ENCODE measurements at regions of chr16 and their contacts with region 1.

Region 1: DNA sequence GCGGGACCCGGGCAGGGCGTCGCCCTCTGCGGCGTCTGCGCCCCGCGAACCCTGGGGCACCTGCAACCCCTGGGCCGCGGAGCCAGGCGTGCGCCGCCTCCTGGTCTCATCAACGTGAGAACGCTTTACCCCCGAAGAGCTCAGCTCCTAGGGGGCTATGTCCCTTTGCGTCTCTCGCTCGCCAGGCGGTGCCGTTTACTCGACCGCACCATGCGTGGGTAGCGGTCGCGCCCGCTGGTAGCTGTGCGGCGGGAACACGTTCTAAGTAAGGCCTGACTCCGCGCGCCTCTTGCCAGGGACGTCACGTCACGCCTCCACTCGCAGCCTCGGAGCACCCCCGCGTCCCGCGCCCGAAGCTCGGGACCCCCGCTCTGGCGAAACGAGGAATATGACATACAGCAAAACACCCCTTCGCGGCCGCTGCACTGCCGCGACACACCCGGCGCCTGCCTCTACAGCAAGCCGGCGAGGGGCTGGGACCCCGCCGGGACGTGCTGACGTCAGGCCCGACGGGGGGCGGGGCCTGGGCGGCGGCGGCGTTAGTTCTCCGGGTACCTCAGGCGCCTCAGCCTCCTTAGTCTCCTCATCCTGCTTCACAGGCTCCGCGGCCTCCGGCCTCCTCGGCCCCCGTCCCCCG is at the start of gene RAB11FIP3:
- DNase-seq: peak; percentile 88
- H3K4me3 ChIP-seq: peak within 1 kb of the TSS; percentile 40 to 81 (median 77)
- H3K27ac ChIP-seq: peak within 1 kb of the TSS; percentile 94
- H3K4me1 ChIP-seq: peaks cover 27% of the 10 kb centered on the region
- H3K27me3 ChIP-seq: no peaks in the 10 kb centered on the region
- CTCF ChIP-seq: peak; percentile 7 to 16
- POLR2A ChIP-seq: peak; percentile 97
- total RNA-seq, gene RAB11FIP3: 64.9 and 75.9 TPM in 2 replicates

Region 2: DNA sequence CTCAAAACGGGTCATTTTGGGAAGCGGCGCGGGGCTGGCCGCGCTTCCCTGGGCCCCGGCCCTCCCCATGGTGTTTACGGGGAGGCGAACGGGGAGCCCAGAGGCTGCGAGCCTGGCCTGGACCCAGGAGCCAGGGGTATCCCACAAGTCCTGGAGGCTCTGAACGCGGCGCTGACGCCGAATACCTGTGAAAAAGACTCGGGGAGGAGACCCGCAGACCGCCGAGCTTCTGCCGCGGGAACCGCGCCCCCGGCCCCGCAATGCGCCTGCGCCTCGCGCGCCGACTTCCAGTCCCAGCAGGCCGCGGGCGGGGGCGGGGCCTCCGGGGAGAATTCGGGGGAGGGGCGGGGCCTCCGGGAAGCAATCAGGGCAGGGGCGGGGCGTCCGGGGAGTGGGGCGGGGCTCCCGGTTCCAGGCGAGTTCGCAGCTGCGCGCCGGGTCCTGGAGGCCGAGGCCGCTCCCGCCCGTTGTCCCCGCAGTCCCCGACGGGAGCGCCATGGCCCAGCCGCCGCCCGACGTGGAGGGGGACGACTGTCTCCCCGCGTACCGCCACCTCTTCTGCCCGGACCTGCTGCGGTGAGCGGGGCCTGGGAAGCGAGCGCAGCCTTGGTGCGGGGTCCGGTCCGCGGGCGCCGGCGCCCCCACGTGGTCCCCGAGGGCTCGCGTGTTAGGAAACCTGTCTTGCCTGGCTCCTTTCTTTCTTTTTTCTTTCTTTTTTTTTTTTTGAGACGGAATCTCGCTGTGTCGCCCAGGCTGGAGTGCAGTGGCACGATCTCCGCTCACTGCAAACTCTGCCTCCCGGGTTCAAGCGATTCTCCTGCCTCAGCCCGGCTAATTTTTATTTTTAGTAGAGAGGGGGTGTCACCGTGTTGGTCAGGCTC is 23.5 kb before region 1 on chr16 and contains the start of gene DECR2:
- CTCF ChIA-PET with region 1: interaction called, 4 read pairs
- POLR2A ChIA-PET with region 1: no interaction called
- dilution Hi-C with region 1: no loop called
- intact Hi-C with region 1: loop called (anchors 1 kb)
- DNase-seq: peak; percentile 87
- H3K4me3 ChIP-seq: peak within 1 kb of the TSS; percentile 58 to 74 (median 63)
- H3K27ac ChIP-seq: peak within 1 kb of the TSS; percentile 45
- H3K4me1 ChIP-seq: peaks cover 11% of the 10 kb centered on the region
- H3K27me3 ChIP-seq: no peaks in the 10 kb centered on the region
- CTCF ChIP-seq: peak; percentile 38 to 60
- POLR2A ChIP-seq: peak; percentile 94
- total RNA-seq, gene DECR2: 23.1 and 28.3 TPM in 2 replicates

Region 3: GRCh38 chr16:457732-458400 is 32.7 kb after region 1 on chr16:
- CTCF ChIA-PET with region 1: interaction called, 7 read pairs
- POLR2A ChIA-PET with region 1: no interaction called
- dilution Hi-C with region 1: no loop called
- intact Hi-C with region 1: loop called (anchors 1 kb)
- DNase-seq: peak; percentile 77
- H3K4me3 ChIP-seq: no peak overlapping the region
- H3K27ac ChIP-seq: peak overlapping the region; percentile 97
- H3K4me1 ChIP-seq: peaks cover 20% of the 10 kb centered on the region
- H3K27me3 ChIP-seq: no peaks in the 10 kb centered on the region
- CTCF ChIP-seq: peak in 1 of 2 donors; percentile 16
- POLR2A ChIP-seq: peak; percentile 36

Region 4: DNA sequence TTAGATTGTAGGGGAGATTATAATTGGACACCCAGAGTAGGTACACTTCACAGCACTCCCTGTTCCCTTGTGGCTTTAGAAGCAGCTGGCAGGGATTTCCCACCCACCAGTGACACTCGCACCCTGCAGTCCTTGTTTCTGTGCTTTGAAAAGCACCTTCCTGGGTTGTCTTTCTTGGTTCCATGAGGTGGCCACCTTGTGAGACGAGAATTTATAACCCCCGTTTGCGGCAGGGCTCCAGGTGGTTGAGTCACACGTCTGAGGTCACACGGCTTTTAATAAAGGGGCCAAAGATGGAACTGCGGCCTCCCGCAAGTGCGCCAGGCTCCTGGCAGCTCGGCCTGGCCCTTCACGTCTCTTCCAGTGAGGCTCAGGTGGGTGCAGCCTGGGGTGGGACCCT is 52.6 kb after region 1 on chr16:
- CTCF ChIA-PET with region 1: no interaction called
- POLR2A ChIA-PET with region 1: no interaction called
- dilution Hi-C with region 1: no loop called
- intact Hi-C with region 1: loop called (anchors 5 kb)
- DNase-seq: no peak
- H3K4me3 ChIP-seq: no peak overlapping the region
- H3K27ac ChIP-seq: peak overlapping the region; percentile 58
- H3K4me1 ChIP-seq: peaks cover 8% of the 10 kb centered on the region
- H3K27me3 ChIP-seq: no peaks in the 10 kb centered on the region
- CTCF ChIP-seq: no peak
- POLR2A ChIP-seq: peak; percentile 1

Region 5: GRCh38 chr16:483341-484075 is 58.3 kb after region 1 on chr16:
- CTCF ChIA-PET with region 1: interaction called, 19 read pairs
- POLR2A ChIA-PET with region 1: no interaction called
- dilution Hi-C with region 1: no loop called
- intact Hi-C with region 1: loop called (anchors 5 kb)
- DNase-seq: no peak
- H3K4me3 ChIP-seq: no peak overlapping the region
- H3K27ac ChIP-seq: no peak overlapping the region
- H3K4me1 ChIP-seq: no peaks in the 10 kb centered on the region
- H3K27me3 ChIP-seq: no peaks in the 10 kb centered on the region
- CTCF ChIP-seq: no peak
- POLR2A ChIP-seq: no peak

Region 6: DNA sequence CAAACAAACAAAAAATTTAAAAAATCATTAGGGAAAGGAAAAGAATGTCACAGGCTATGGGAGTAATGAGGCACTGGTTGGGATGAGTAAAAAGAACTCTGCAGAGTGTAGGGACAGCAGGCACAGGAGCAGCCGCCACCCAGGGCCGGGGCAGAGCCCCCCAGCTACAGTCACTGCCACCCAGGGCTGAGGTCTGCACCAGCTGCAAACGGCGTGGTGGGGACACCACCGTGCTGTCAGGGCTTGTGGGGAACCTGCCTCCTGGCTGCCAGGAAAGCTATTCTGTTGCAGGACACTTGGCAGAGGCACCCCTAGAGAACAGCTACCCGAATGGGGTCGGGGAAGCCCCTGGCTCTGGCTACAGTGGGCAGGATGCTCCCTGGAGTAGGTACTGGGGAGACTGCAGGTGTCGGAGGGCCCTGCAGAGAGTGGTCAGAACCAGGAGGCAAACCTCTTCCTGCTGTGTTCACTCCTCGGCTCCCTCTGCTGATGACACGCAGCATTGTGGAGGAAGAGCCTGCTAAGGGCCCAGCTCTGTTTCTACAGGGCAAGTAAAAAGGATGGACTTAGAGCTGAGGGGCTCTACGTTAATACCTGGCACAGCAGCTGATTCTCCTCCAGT is 70.0 kb after region 1 on chr16:
- CTCF ChIA-PET with region 1: interaction called, 6 read pairs
- POLR2A ChIA-PET with region 1: no interaction called
- dilution Hi-C with region 1: no loop called
- intact Hi-C with region 1: loop called (anchors 5 kb)
- DNase-seq: peak; percentile 49
- H3K4me3 ChIP-seq: no peak overlapping the region
- H3K27ac ChIP-seq: no peak overlapping the region
- H3K4me1 ChIP-seq: no peaks in the 10 kb centered on the region
- H3K27me3 ChIP-seq: no peaks in the 10 kb centered on the region
- CTCF ChIP-seq: peak; percentile 49 to 54
- POLR2A ChIP-seq: no peak

Region 7: GRCh38 chr16:527006-527753 is 102.0 kb after region 1 on chr16 and contains the start of gene CAPN15:
- CTCF ChIA-PET with region 1: no interaction called
- POLR2A ChIA-PET with region 1: no interaction called
- dilution Hi-C with region 1: no loop called
- intact Hi-C with region 1: loop called (anchors 1 kb)
- DNase-seq: peak; percentile 90
- H3K4me3 ChIP-seq: peak within 1 kb of the TSS; percentile 42 to 81 (median 78)
- H3K27ac ChIP-seq: peak within 1 kb of the TSS; percentile 90
- H3K4me1 ChIP-seq: peaks cover 35% of the 10 kb centered on the region
- H3K27me3 ChIP-seq: no peaks in the 10 kb centered on the region
- CTCF ChIP-seq: no peak
- POLR2A ChIP-seq: peak; percentile 65
- total RNA-seq, gene CAPN15: 65.0 and 70.1 TPM in 2 replicates